ENCODE measurements at regions of chr5 and their contacts with region 1.

Region 1: DNA sequence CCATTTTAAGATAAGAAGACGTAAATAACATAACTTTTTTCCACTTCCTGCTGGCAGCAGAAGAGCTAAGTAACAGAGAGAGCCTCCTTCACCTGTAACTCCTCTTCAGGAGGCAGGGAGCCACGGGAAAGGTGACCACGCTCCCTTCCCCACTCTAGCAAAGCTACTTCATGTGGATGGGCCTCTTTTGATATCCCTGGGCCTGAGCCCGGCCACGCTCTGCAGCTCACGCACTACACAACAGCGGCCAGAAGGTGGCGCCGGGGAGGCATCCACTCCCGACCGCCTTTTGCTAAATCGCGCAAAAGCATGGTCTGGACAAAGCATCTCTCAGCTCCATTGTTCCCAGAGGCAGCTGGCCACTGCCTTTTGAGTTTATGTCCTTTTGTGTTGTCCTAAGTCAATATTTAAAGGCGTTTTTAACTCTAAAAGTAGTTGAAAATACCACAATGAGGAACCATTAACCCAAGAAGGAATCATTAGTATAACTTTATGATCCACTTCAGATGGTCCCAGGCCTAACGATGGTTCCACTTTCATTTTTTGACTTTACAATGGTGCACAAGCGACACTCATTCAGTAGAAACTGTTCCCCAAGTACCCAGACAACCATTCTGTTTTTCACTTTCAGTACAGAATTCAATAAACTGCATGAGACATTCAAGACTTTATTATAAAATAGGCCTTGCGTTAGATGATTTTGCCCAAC is 23.6 kb downstream of the CMBL start:
- DNase-seq: peak; percentile 79 to 91 (median 88)
- H3K4me3 ChIP-seq: no peak overlapping the region
- H3K27ac ChIP-seq: no peak overlapping the region
- H3K4me1 ChIP-seq: peaks cover 6% of the 10 kb centered on the region
- H3K27me3 ChIP-seq: no peaks in the 10 kb centered on the region
- CTCF ChIP-seq: peak; percentile 84 to 88 (median 87)
- EP300 ChIP-seq: no peak
- POLR2A ChIP-seq: no peak

Region 2: DNA sequence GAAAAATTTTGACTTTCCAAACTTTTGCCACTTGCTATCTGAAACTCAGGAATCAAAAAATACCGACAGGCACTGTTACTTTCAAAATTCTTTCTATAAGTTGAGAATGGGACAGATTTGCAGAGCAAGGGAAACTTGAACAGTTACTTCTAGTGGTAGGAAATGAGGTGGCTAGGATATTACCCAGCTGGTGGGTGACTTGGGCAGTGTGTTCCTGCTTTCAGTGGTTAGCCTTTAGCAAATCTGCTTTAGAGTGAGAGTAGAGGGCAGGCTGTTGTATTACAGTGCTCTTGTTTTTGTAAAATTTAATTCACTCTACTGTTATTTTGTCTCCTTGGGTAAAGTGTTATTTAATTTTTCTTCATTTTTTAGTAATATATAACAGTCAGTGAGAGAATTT is 117.4 kb after region 1 on chr5:
- intact Hi-C with region 1: loop called in 1 of 4 experiments (anchors 10 kb)
- DNase-seq: no peak
- H3K4me3 ChIP-seq: no peak overlapping the region
- H3K27ac ChIP-seq: no peak overlapping the region
- H3K4me1 ChIP-seq: no peaks in the 10 kb centered on the region
- H3K27me3 ChIP-seq: no peaks in the 10 kb centered on the region
- CTCF ChIP-seq: no peak
- EP300 ChIP-seq: no peak
- POLR2A ChIP-seq: no peak

Region 3: DNA sequence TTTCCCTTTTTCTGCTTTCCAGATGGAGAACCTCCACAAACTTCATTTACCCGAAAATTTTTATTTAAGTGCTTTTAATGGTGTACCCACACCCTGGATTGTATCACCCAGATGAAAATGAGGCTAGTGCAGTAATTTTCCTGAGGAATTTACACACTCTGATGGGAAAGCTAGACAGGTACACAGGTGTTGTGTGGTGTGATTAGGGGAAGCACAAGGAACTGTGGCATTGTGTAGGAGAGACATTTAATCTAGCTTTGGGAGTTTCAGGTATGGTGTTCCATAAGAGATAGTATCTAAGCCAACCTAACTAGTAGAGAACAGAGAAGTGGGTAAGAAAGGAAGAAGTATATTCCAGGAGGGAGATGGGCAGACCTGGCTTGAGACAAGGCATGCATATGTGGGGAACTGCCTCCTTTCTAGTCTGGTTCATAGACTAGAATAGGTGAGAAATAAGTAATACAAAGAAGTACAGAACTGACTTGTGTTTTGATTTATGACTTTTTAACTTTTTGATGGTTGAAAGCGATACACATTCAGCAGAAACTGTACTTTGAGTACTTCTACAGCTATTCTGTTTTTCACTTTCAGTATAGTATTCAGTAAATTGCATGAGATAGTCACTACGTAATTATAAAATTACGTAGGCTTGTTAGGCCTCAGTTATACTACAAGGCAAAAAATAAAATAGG is 134.7 kb after region 1 on chr5:
- intact Hi-C with region 1: loop called in 3 of 4 experiments (anchors 10 kb)
- DNase-seq: no peak
- H3K4me3 ChIP-seq: no peak overlapping the region
- H3K27ac ChIP-seq: no peak overlapping the region
- H3K4me1 ChIP-seq: no peaks in the 10 kb centered on the region
- H3K27me3 ChIP-seq: no peaks in the 10 kb centered on the region
- CTCF ChIP-seq: no peak
- EP300 ChIP-seq: no peak
- POLR2A ChIP-seq: no peak

Region 4: DNA sequence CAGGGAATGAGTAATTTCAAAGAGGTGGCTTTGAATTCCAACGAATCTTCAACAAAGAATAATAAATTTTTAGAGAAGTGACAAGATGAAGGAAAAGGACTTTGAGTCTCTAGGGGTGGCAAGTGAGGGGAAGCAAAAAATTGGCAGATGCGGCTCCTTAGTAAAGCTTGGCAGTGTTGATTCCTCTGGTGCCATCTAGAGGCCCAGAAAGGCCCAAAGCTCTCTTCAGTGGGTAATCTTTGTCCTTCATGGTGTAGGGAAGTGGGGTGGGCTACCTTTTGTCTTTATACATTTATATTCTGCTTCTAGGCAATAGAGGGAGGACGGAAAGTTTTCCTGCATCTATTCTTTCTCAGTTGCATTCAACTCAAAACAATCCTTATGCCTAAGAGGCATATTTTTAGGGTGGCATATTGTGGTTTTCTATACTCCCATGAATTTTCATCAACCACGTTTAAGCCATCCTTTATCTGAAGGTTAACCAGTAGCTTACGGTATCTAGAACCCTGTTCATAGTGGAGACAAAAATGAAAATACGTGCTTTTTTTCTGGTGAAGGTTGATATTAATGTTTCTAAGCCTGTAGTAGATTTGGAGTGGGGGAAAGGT is 140.1 kb after region 1 on chr5:
- intact Hi-C with region 1: loop called in 3 of 4 experiments (anchors 10 kb)
- DNase-seq: no peak
- H3K4me3 ChIP-seq: no peak overlapping the region
- H3K27ac ChIP-seq: no peak overlapping the region
- H3K4me1 ChIP-seq: no peaks in the 10 kb centered on the region
- H3K27me3 ChIP-seq: no peaks in the 10 kb centered on the region
- CTCF ChIP-seq: no peak
- EP300 ChIP-seq: no peak
- POLR2A ChIP-seq: no peak

Region 5: GRCh38 chr5:10627160-10627701 is 343.1 kb after region 1 on chr5:
- intact Hi-C with region 1: loop called in 3 of 4 experiments (anchors 5 to 10 kb)
- DNase-seq: peak in 2 of 5 donors; percentile 42 to 53
- H3K4me3 ChIP-seq: peak overlapping the region; percentile 26
- H3K27ac ChIP-seq: peak overlapping the region; percentile 44 to 79
- H3K4me1 ChIP-seq: peaks cover 4% of the 10 kb centered on the region
- H3K27me3 ChIP-seq: no peaks in the 10 kb centered on the region
- CTCF ChIP-seq: no peak
- EP300 ChIP-seq: no peak
- POLR2A ChIP-seq: no peak

Region 6: GRCh38 chr5:10635257-10635866 is 351.3 kb after region 1 on chr5:
- intact Hi-C with region 1: loop called in 1 of 4 experiments (anchors 10 kb)
- DNase-seq: no peak
- H3K4me3 ChIP-seq: no peak overlapping the region
- H3K27ac ChIP-seq: no peak overlapping the region
- H3K4me1 ChIP-seq: no peaks in the 10 kb centered on the region
- H3K27me3 ChIP-seq: no peaks in the 10 kb centered on the region
- CTCF ChIP-seq: no peak
- EP300 ChIP-seq: no peak
- POLR2A ChIP-seq: no peak